ENCODE measurements at regions of chr21 and their contacts with region 1.

Region 1: GRCh38 chr21:33266050-33266788 is at the start of gene IL10RB:
- DNase-seq: peak; percentile 27
- ATAC-seq: peak; percentile 72
- H3K4me3 ChIP-seq: peak within 1 kb of the TSS; percentile 81
- H3K27ac ChIP-seq: peak within 1 kb of the TSS; percentile 96
- H3K4me1 ChIP-seq: peaks cover 28% of the 10 kb centered on the region
- H3K27me3 ChIP-seq: no peaks in the 10 kb centered on the region
- CTCF ChIP-seq: no peak
- EP300 ChIP-seq: no peak
- POLR2A ChIP-seq: peak; percentile 88
- RAD21 ChIP-seq: no peak
- polyA plus RNA-seq, gene IL10RB: 15.0 to 23.3 TPM

Region 2: DNA sequence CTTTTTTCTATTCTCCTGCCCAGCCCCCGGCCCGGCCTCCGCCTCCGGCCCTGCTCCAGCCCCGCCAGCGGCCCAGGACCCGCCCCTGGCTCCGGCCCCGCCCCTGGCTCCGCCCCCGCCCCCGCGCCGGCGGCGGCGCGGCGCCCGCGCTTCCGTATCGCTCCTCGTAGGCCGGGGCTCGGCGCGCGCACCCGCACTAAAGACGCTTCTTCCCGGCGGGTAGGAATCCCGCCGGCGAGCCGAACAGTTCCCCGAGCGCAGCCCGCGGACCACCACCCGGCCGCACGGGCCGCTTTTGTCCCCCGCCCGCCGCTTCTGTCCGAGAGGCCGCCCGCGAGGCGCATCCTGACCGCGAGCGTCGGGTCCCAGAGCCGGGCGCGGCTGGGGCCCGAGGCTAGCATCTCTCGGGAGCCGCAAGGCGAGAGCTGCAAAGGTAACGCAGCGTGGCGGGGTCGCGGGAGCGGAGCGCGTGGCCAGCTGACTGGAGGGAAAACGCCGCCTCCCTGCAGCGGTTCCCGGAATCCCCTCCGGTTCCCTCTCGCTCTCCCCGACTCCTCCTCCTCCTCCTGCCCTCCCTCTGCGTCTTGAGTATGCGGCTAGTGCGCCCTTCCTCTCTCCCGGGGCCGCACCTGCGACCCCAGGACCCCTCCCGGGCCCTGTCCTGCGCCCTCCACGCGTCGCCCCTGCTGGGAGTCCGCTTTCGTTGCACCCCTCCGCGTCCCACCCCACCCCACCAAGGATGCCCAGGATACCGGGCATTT is 36.3 kb before region 1 on chr21 and contains the start of gene IFNAR2:
- CTCF ChIA-PET with region 1: interaction called, 16 read pairs
- POLR2A ChIA-PET with region 1: interaction called, 7 read pairs
- RAD21 ChIA-PET with region 1: interaction called, 26 read pairs
- SMC1A ChIA-PET with region 1: interaction called, 92 read pairs
- in situ Hi-C with region 1: no loop called
- intact Hi-C with region 1: loop called (anchors 2 kb)
- DNase-seq: no peak
- ATAC-seq: peak; percentile 75
- H3K4me3 ChIP-seq: peak within 1 kb of the TSS; percentile 100
- H3K27ac ChIP-seq: peak within 1 kb of the TSS; percentile 96
- H3K4me1 ChIP-seq: peaks cover 13% of the 10 kb centered on the region
- H3K27me3 ChIP-seq: no peaks in the 10 kb centered on the region
- CTCF ChIP-seq: no peak
- EP300 ChIP-seq: no peak
- POLR2A ChIP-seq: peak; percentile 64; the same call in 1 of the 2 replicates
- RAD21 ChIP-seq: no peak
- polyA plus RNA-seq, gene IFNAR2: 8.5 to 23.3 TPM

Region 3: DNA sequence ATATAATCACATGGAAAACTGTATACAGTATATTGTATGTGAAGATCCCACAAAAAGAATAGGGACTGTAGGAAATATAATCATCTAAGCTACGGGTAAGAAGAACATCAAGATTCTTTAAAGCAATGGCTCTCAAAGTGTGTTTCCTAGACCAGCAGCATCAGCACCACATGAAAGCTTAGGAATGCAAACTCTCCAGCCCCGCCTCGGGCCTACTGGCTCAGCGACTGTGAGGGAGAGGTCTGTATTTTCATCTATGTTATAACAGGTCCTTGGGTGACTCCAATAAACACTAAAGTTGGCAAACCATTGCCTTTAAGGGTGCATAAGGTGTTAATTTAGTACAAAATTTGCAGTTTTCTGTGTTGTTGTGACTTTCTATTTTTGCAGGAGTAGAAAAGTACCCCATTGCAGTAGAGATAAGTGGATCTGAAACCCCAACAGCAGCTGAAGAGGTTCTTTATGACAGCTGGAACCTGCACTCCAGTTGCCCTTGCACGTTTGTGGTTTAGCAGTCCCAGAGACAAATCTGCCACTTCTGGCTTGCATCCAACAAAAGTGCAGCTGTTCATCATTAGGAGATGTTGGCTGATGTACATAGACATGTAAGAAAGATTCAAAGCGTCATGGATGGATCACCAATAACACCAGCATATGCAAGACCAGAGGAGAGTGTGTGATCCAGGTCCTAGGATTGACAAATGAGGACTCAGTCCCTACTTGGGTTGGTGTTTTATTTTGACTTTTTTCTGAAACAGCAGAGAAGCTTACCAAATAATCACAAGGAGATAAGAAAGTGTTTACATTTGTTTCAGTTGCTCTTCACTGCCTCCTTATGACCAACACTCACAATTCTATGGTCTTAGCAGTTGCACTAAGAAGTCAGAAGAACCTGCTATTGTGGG is 42.6 kb after region 1 on chr21:
- CTCF ChIA-PET with region 1: no interaction called
- POLR2A ChIA-PET with region 1: interaction called, 3 read pairs
- RAD21 ChIA-PET with region 1: interaction called, 12 read pairs
- SMC1A ChIA-PET with region 1: interaction called, 11 read pairs
- in situ Hi-C with region 1: no loop called
- intact Hi-C with region 1: no loop called
- DNase-seq: peak; percentile 98
- ATAC-seq: peak; percentile 96
- H3K4me3 ChIP-seq: peak overlapping the region; percentile 9; the same call in 1 of the 2 replicates
- H3K27ac ChIP-seq: peak overlapping the region; percentile 57
- H3K4me1 ChIP-seq: peaks cover 21% of the 10 kb centered on the region
- H3K27me3 ChIP-seq: no peaks in the 10 kb centered on the region
- CTCF ChIP-seq: peak in 2 of 3 experiments; percentile 5 to 33; a peak in 2 of 6 replicates
- EP300 ChIP-seq: peak; percentile 91; a peak in 3 of 4 replicates
- POLR2A ChIP-seq: no peak
- RAD21 ChIP-seq: 0 out of 2 replicates have a peak, but pooled peaks have one; percentile 17

Region 4: GRCh38 chr21:33380483-33380998 is 114.3 kb after region 1 on chr21:
- CTCF ChIA-PET with region 1: no interaction called
- POLR2A ChIA-PET with region 1: no interaction called
- RAD21 ChIA-PET with region 1: interaction called, 12 read pairs
- SMC1A ChIA-PET with region 1: interaction called, 5 read pairs
- in situ Hi-C with region 1: no loop called
- intact Hi-C with region 1: loop called (anchors 5 kb)
- DNase-seq: peak; percentile 95
- ATAC-seq: peak; percentile 70
- H3K4me3 ChIP-seq: no peak overlapping the region; the same call in 1 of the 2 replicates
- H3K27ac ChIP-seq: peak overlapping the region; percentile 95
- H3K4me1 ChIP-seq: peaks cover 54% of the 10 kb centered on the region
- H3K27me3 ChIP-seq: no peaks in the 10 kb centered on the region
- CTCF ChIP-seq: no peak
- EP300 ChIP-seq: peak; percentile 30 to 48; a peak in 2 of 4 replicates
- POLR2A ChIP-seq: peak; percentile 69; the same call in 1 of the 2 replicates
- RAD21 ChIP-seq: no peak

Region 5: DNA sequence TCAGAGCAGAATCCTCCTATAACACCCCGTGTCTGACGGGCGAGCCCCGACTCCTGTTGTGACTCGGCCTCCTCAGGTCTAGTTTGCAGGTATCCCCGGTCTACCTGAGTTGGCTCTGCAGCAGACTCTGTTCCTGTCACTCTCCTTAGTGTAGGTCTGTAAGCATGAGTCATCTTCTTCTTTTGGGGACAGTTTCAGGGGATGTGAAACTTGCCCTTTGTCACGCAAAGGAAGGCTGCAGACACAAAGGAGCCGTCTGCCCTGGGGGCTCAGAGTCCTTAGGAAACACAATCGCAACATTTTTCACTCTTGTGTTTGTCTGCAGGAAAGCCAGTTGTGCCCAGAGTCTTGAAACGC is 1599.7 kb after region 1 on chr21:
- CTCF ChIA-PET with region 1: no interaction called
- POLR2A ChIA-PET with region 1: no interaction called
- RAD21 ChIA-PET with region 1: no interaction called
- SMC1A ChIA-PET with region 1: no interaction called
- in situ Hi-C with region 1: loop called (anchors 25 kb)
- intact Hi-C with region 1: no loop called
- DNase-seq: peak; percentile 74
- ATAC-seq: peak; percentile 93
- H3K4me3 ChIP-seq: no peak overlapping the region; the same call in 1 of the 2 replicates
- H3K27ac ChIP-seq: peak overlapping the region; percentile 76
- H3K4me1 ChIP-seq: peaks cover 29% of the 10 kb centered on the region
- H3K27me3 ChIP-seq: no peaks in the 10 kb centered on the region; a peak in 1 of 4 replicates
- CTCF ChIP-seq: no peak
- EP300 ChIP-seq: peak; percentile 76 to 97; a peak in 3 of 4 replicates
- POLR2A ChIP-seq: no peak
- RAD21 ChIP-seq: no peak; the same call in 1 of the 2 replicates